Activated naive CD4-positive, alpha-beta T cell treated with anti-CD3 and anti-CD28 coated beads for 36 hours (primary cell): ENCODE measurements at regions of chr6 and their contacts with region 1.

Region 1: GRCh38 chr6:134373282-134373922 is 55.5 kb upstream of the SGK1 start:
- DNase-seq: peak; percentile 61
- H3K4me3 Mint-ChIP-seq: no peak overlapping the region
- H3K27ac Mint-ChIP-seq: peak overlapping the region; percentile 4
- H3K4me1 Mint-ChIP-seq: peaks cover 38% of the 10 kb centered on the region
- H3K27me3 Mint-ChIP-seq: no peaks in the 10 kb centered on the region

Region 2: DNA sequence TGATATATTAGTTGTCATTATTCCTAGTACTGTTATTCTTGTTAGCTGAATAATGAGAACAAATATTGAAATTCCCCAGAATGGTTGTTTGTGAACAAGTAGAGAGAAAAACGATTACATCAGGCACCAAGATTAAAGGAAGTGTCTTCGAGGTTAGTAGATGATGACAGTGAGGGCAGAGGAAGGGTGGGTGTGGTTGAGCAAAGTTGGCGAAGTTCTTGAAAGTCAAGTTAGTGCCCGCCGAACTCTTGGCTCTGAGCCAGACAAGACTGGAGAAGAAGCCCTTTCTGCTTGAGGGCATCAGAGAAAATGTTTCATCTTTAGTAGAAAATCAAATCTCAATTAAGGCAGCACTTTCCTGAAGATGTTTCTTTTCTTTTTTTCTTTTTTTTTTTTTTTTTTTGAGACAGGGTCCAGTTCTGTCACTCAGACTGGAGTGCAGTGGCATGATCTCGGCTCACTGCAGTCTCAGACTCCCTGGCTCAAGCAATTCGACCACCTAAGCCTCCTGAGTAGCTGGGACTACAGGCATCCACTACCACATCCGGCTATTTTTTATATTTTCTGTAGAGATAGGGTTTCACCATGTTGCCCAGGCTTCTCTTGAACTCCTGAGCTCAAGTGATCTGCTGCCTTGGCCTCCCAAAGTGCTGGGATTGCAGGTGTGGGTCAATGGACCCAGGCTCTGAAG is 132.6 kb before region 1 on chr6:
- CTCF ChIA-PET with region 1: no interaction called
- intact Hi-C with region 1: no loop called
- DNase-seq: peak; percentile 90
- H3K4me3 Mint-ChIP-seq: peak overlapping the region; percentile 31
- H3K27ac Mint-ChIP-seq: peak overlapping the region; percentile 97
- H3K4me1 Mint-ChIP-seq: peaks cover 57% of the 10 kb centered on the region
- H3K27me3 Mint-ChIP-seq: no peaks in the 10 kb centered on the region

Region 3: GRCh38 chr6:134352786-134353480 is 20.5 kb before region 1 on chr6:
- CTCF ChIA-PET with region 1: no interaction called
- intact Hi-C with region 1: loop called (anchors 1 kb)
- DNase-seq: peak; percentile 53
- H3K4me3 Mint-ChIP-seq: no peak overlapping the region
- H3K27ac Mint-ChIP-seq: no peak overlapping the region
- H3K4me1 Mint-ChIP-seq: peaks cover 29% of the 10 kb centered on the region
- H3K27me3 Mint-ChIP-seq: no peaks in the 10 kb centered on the region